Ascending aorta (tissue), 2 donors: ENCODE measurements at regions of chr9 and their contacts with region 1.

Region 1: DNA sequence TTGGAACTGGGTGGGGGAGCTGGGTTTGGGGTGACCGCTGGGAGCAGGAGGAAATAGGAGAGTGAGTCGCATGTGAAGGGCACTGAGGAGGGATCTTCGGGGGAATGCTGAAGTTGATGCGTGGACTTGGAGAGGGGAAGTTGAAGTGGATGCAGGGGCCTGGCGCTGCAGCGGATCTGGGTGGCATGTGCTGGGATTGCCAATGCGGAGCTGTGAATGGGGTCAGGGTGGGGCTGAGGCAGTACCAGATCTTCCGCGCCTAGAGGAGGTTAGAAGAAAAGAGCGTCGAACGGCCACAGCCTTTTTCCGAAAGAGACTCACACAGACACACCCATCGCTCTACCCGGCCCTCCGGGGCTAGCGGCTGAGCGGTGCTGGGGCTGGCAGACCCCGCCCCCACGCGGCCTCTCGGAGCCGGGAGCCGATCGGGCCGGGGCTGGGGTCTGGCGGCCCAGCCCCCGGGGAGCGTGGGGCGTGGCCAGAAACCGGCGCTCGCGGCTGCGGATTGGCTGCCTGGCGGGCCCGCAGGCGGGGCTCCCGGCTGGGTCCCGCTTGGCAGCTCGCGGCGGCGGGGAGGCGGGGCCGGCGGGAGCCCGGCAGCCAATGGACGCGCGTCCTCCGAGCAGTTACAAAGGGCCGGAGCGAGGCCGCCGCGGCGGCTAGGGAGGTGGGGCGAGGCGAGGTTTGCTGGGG is at the start of gene TGFBR1:
- DNase-seq: peak; percentile 72 to 97
- H3K4me3 ChIP-seq: peak within 1 kb of the TSS; percentile 82 to 87
- H3K27ac ChIP-seq: peak within 1 kb of the TSS; percentile 92 to 95
- H3K4me1 ChIP-seq: peaks cover 0 to 34% of the 10 kb centered on the region in 2 donors
- H3K27me3 ChIP-seq: no peaks in the 10 kb centered on the region
- CTCF ChIP-seq: no peak
- total RNA-seq, gene TGFBR1: 13.9 TPM

Region 2: GRCh38 chr9:99030092-99030511 is 74.5 kb before region 1 on chr9:
- intact Hi-C with region 1: loop called (anchors 1 kb)
- DNase-seq: peak in 1 of 2 donors; percentile 59
- H3K4me3 ChIP-seq: no peak overlapping the region
- H3K27ac ChIP-seq: peak overlapping the region in 1 of 2 donors; percentile 60
- H3K4me1 ChIP-seq: peaks cover 0 to 2% of the 10 kb centered on the region in 2 donors
- H3K27me3 ChIP-seq: no peaks in the 10 kb centered on the region
- CTCF ChIP-seq: no peak

Region 3: DNA sequence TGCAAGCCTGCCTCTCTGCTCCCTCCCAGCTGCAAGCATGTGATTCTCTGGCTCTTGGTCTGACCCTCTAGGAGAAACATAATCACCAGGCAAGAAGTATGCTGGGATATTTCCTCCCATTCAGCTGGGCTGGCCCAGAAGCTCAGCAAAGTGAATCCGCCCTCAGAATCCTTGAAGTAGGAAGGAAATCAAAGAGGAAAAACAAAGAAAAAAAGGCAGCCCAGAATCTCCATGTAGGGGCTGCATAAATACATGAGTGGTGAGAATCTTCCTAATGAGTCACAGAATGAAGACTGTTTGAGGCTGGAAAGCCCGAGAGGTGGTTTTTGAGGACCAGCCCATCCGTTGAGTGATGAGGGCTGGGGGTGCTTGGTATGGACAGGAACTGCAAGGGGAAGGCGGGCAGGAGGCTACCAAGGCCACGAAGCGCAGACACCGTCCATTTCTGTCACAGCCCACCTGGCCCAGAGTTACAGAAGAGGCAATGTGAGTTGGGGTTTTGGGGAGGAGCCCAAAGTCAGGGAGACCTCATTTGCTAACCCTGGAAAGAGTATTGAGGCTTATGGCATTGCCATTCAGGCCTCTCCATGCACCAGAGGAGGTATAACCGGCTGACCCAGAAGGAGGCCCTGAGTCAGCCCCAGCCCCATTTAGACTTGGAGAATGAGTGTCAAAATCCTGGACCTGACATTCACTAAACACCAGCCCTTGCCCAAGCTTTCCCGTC is 33.1 kb before region 1 on chr9:
- intact Hi-C with region 1: loop called (anchors 2 kb)
- DNase-seq: no peak
- H3K4me3 ChIP-seq: no peak overlapping the region
- H3K27ac ChIP-seq: peak overlapping the region; percentile 20 to 46
- H3K4me1 ChIP-seq: peaks cover 3 to 6% of the 10 kb centered on the region in 2 donors
- H3K27me3 ChIP-seq: no peaks in the 10 kb centered on the region
- CTCF ChIP-seq: no peak

Region 4: DNA sequence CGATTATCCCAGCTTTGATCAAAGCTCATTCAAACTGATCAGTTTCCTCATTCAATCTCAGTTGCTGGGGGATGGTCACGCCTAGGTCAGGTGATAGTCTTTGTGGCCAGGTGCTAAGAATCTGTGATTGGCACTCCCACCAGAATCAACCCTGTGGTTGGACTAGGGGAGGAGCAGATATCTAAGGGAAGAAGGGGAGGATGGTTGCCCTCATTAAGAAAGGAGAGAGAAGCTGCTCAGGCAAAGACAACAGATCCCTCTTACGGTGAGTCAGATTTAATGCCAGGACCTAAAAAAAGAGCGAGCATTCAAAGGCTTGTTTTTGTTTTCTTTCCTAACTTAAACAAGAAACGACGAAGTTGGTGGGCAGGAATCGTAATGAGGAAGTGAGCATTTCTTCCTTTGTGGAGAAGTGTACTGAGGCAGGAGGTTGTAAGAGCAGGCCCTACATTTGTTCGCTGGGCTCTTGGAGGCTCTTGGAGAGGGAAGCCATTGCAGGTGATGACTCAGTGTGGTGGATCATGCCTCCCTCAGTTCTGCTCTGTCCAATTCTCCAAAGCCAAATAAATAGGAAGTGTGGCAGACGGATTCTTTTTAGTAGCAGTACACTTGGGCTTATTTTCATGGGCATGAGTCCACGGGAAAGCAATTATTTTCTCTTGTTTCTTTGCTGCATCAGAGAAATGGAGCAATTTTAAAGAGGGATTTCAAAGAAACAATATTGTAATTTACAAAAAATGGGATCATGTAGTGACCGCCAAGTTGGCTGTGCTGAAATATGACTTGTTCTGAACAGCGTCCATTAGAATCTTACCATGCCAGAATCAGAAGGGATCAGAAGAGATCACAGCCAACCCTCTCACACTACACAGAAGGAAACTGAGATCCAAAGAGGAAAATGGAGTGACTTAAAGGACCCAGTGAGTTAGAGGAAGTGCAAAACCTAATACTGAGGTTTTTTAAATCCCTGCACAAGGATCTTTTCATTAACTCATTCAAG is 18.4 kb before region 1 on chr9:
- intact Hi-C with region 1: loop called (anchors 1 kb)
- DNase-seq: peak in 1 of 2 donors; percentile 76
- H3K4me3 ChIP-seq: no peak overlapping the region
- H3K27ac ChIP-seq: peak overlapping the region; percentile 57 to 62
- H3K4me1 ChIP-seq: peaks cover 5 to 11% of the 10 kb centered on the region in 2 donors
- H3K27me3 ChIP-seq: no peaks in the 10 kb centered on the region
- CTCF ChIP-seq: no peak

Region 5: DNA sequence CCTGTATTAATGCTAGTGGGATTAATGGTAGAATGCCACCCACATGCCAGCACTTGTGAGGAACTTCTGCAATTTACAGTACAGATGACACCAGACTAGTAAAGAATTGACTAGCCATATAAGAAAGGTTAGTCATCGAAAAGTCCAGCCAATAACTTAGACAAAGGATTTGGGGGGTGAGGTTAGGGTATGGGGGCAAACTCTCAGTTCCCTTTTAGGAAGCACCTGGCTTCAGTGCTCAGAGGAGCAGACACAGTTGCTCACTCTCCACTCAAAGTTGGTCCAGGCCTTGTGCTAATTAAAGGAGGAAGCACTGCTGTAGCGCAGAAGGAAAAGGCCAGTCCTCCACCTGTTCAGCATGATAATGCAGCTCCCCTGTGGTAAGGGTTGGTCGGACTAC is 25.5 kb after region 1 on chr9:
- intact Hi-C with region 1: no loop called
- DNase-seq: no peak
- H3K4me3 ChIP-seq: no peak overlapping the region
- H3K27ac ChIP-seq: no peak overlapping the region
- H3K4me1 ChIP-seq: peaks cover 0 to 4% of the 10 kb centered on the region in 2 donors
- H3K27me3 ChIP-seq: no peaks in the 10 kb centered on the region
- CTCF ChIP-seq: no peak

Region 6: GRCh38 chr9:99221621-99222415 is 117.2 kb after region 1 on chr9 and contains the starts of genes ALG2 and SEC61B:
- intact Hi-C with region 1: loop called (anchors 10 kb)
- DNase-seq: peak; percentile 70 to 96
- H3K4me3 ChIP-seq: peak within 1 kb of the TSS; percentile 94 to 99
- H3K27ac ChIP-seq: peak within 1 kb of the TSS; percentile 88 to 93
- H3K4me1 ChIP-seq: peaks cover 13 to 28% of the 10 kb centered on the region in 2 donors
- H3K27me3 ChIP-seq: no peaks in the 10 kb centered on the region
- CTCF ChIP-seq: peak in 1 of 3 experiments; percentile 13
- total RNA-seq, gene ALG2: 17.1 TPM
- total RNA-seq, gene SEC61B: 88.7 TPM